Activated CD4-positive, alpha-beta T cell treated with anti-CD3 and anti-CD28 coated beads, Interleukin-2, amount 10 ng/mL, durations not matched to agents 24 days and 14 days (primary cell): ENCODE measurements at regions of chr6 and their contacts with region 1.

Region 1: GRCh38 chr6:151451950-151452749 is at the start of gene RMND1:
- DNase-seq: peak; percentile 100
- H3K4me3 Mint-ChIP-seq: peak within 1 kb of the TSS; percentile 97
- H3K27ac Mint-ChIP-seq: peak within 1 kb of the TSS; percentile 96
- H3K4me1 Mint-ChIP-seq: peaks cover 37% of the 10 kb centered on the region
- H3K27me3 Mint-ChIP-seq: peaks cover 3% of the 10 kb centered on the region
- total RNA-seq, gene RMND1: 22.2 and 22.9 TPM in 2 replicates

Region 2: GRCh38 chr6:150549674-150550101 is 902.5 kb before region 1 on chr6:
- intact Hi-C with region 1: no loop called
- DNase-seq: no peak
- H3K4me3 Mint-ChIP-seq: no peak overlapping the region
- H3K27ac Mint-ChIP-seq: no peak overlapping the region
- H3K4me1 Mint-ChIP-seq: no peaks in the 10 kb centered on the region
- H3K27me3 Mint-ChIP-seq: peaks cover 17% of the 10 kb centered on the region

Region 3: DNA sequence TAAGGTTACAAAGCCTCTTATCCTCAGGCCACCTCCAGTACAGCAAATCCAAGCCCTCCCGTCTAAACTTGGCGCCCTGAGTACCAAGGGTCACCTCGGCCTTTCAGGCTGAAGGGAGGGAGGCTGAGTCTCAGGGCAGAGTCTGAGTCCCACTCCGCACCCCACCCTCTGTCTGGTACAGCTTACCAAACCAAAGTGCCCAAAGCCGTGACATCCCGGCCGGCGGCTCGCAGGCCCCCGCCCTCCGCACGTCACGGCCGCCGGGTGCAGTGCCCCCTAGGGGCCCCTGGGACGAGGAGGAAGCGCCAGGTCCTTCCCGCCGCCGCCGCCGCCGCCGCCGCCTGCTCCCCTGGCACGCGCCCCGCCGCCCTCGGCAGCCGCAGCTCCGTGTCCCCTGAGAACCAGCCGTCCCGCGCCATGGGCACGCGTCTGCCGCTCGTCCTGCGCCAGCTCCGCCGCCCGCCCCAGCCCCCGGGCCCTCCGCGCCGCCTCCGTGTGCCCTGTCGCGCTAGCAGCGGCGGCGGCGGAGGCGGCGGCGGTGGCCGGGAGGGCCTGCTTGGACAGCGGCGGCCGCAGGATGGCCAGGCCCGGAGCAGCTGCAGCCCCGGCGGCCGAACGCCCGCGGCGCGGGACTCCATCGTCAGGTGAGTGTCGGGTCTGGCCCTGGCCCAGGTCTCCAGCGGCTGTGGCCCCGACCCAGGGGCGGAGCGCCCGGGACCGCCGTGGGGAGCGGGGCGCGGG is 586.6 kb before region 1 on chr6 and contains the start of gene MTHFD1L:
- intact Hi-C with region 1: loop called (anchors 1 kb)
- DNase-seq: peak; percentile 94
- H3K4me3 Mint-ChIP-seq: peak within 1 kb of the TSS; percentile 98
- H3K27ac Mint-ChIP-seq: peak within 1 kb of the TSS; percentile 93
- H3K4me1 Mint-ChIP-seq: peaks cover 29% of the 10 kb centered on the region
- H3K27me3 Mint-ChIP-seq: peaks cover 10% of the 10 kb centered on the region
- total RNA-seq, gene MTHFD1L: 136 and 137 TPM in 2 replicates

Region 4: DNA sequence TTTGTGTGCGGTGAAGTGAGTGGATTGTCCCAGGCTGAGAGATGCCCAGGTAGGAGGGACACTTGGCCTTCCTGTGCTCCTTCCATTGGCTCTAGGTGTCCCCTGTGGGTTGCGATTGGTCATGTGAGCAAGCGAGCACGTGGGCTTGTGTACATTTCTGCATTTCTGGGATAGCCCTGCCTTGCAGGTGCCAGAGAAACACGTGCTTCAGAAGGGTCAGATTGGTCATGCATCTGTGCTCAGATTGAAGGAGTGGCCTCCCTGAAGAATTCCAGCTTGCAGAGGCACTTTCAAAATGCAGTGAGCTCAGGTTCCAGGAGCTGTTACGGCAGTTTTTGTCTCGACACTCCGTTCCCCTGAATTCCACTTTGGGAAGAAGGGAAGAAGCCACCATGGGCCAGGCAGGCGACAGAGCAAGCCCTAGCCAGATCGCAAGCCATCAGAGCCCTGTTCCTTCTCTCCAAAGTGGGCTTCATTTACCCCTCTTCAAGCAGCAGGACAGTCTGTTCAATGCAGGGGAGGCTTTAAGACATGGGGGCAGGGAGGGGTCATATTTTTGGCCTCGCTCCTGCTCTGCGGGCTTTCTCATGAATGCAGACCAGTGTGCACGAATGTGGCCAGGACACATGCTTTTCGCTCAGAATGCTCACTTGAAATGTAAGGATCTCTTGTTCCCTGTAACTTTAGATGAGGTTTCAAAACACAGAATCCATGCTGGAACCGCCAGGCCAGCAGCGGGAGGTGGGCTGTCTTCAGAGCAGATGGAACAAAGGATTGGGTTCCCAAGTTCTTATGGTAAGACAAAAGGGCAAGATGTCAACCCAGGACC is 291.0 kb before region 1 on chr6:
- intact Hi-C with region 1: no loop called
- DNase-seq: no peak
- H3K4me3 Mint-ChIP-seq: no peak overlapping the region
- H3K27ac Mint-ChIP-seq: no peak overlapping the region
- H3K4me1 Mint-ChIP-seq: no peaks in the 10 kb centered on the region
- H3K27me3 Mint-ChIP-seq: no peaks in the 10 kb centered on the region

Region 5: DNA sequence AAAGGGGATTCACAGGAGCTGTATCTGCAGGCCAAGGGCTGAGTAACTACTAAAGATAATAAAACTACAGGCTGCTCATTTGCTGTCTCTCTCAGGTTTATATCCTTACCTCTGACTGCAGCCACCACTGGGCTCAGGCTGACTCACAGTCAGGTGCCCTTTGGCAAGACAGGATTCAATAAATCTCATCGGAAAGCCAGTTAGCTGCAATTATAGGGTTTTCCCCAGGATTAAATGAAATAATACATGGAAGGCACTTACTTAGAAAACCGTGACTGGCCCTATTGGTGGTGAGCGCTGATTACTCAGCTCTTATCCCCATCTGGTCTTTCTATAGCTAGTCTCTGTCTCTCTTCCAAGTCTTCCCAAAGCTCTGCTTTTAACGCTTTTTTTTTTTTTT is 26.6 kb before region 1 on chr6:
- intact Hi-C with region 1: no loop called
- DNase-seq: no peak
- H3K4me3 Mint-ChIP-seq: no peak overlapping the region
- H3K27ac Mint-ChIP-seq: no peak overlapping the region
- H3K4me1 Mint-ChIP-seq: no peaks in the 10 kb centered on the region
- H3K27me3 Mint-ChIP-seq: no peaks in the 10 kb centered on the region

Region 6: GRCh38 chr6:151475653-151476523 is 23.7 kb after region 1 on chr6:
- intact Hi-C with region 1: loop called (anchors 1 kb)
- DNase-seq: peak; percentile 83
- H3K4me3 Mint-ChIP-seq: no peak overlapping the region
- H3K27ac Mint-ChIP-seq: no peak overlapping the region
- H3K4me1 Mint-ChIP-seq: peaks cover 6% of the 10 kb centered on the region
- H3K27me3 Mint-ChIP-seq: no peaks in the 10 kb centered on the region

Region 7: GRCh38 chr6:151589667-151590066 is 137.5 kb after region 1 on chr6:
- intact Hi-C with region 1: no loop called
- DNase-seq: no peak
- H3K4me3 Mint-ChIP-seq: no peak overlapping the region
- H3K27ac Mint-ChIP-seq: no peak overlapping the region
- H3K4me1 Mint-ChIP-seq: no peaks in the 10 kb centered on the region
- H3K27me3 Mint-ChIP-seq: peaks cover 4% of the 10 kb centered on the region

Region 8: GRCh38 chr6:152301764-152302568 is 849.8 kb after region 1 on chr6:
- intact Hi-C with region 1: loop called (anchors 1 kb)
- DNase-seq: peak; percentile 97
- H3K4me3 Mint-ChIP-seq: peak overlapping the region; percentile 94
- H3K27ac Mint-ChIP-seq: peak overlapping the region; percentile 99
- H3K4me1 Mint-ChIP-seq: peaks cover 23% of the 10 kb centered on the region
- H3K27me3 Mint-ChIP-seq: no peaks in the 10 kb centered on the region

Region 9: GRCh38 chr6:152982768-152983636 is 1530.9 kb after region 1 on chr6 and contains the start of gene FBXO5:
- intact Hi-C with region 1: loop called (anchors 5 kb)
- DNase-seq: peak; percentile 99
- H3K4me3 Mint-ChIP-seq: peak within 1 kb of the TSS; percentile 92
- H3K27ac Mint-ChIP-seq: peak within 1 kb of the TSS; percentile 100
- H3K4me1 Mint-ChIP-seq: peaks cover 46% of the 10 kb centered on the region
- H3K27me3 Mint-ChIP-seq: no peaks in the 10 kb centered on the region
- total RNA-seq, gene FBXO5: 34.9 and 36.4 TPM in 2 replicates